Panc1 (cell line): ENCODE measurements at regions of chr2 and their contacts with region 1.

Region 1: DNA sequence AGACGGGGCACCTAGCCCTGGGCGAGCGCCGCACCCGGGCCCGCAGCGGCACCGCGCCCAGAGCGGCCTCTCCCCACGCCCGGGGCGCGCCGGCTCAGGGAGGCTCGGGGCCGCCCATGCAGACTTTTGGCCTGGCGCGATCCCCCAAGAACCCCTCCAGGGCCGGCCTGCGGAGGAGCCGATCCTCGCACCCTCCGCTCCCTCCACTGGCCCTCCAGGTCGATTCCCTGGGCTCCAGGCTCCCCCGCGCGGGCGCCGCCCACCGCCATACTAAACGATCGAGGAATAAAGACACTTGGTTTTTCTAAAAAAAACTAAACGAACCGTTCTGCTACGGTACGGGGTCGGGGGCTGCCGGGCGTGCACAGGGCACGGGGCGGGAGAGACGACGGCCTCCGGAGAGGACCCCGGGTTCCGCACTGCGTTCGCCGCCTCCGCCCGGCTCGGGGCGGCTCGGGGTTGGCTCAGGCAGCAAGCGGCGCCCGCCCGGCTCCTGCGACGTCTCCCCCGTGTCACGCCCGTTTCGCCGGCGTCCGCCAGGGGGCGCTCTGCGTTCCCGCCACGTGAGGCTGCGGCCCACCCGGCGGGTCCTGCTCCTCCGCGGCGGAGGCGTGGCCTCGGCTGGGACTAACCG is 365 bp upstream of the KHK start:
- DNase-seq: peak; percentile 59
- ATAC-seq: peak; percentile 90
- H3K4me3 ChIP-seq: peak overlapping the region; percentile 61 to 62
- H3K27ac ChIP-seq: peak overlapping the region; percentile 70
- H3K4me1 ChIP-seq: peaks cover 7% of the 10 kb centered on the region
- H3K27me3 ChIP-seq: no peaks in the 10 kb centered on the region
- CTCF ChIP-seq: peak; percentile 97

Region 2: DNA sequence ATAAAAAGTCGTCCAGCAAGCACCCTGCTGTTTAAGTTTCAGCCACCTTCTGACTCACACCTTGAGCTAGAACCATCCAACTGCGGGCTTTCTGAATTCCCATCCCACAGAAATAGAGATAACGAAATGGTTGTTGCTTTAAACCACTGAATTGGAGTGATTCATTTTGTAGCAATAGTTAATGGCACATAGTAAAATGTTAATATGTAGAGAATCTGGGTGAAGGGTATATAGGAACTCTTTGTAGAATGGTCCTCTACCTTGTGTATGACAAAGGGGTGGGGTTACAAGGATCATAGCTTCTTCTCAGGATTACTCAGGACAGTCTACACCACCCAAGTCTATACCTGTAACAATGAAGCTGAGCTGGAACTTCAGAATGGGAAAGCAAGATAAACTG is 118.2 kb before region 1 on chr2:
- CTCF ChIA-PET with region 1: no interaction called
- POLR2A ChIA-PET with region 1: no interaction called
- in situ Hi-C with region 1: no loop called
- intact Hi-C with region 1: loop called (anchors 10 kb)
- DNase-seq: no peak
- ATAC-seq: no peak
- H3K4me3 ChIP-seq: no peak overlapping the region
- H3K27ac ChIP-seq: no peak overlapping the region
- H3K4me1 ChIP-seq: peaks cover 12% of the 10 kb centered on the region
- H3K27me3 ChIP-seq: peaks cover 13% of the 10 kb centered on the region
- CTCF ChIP-seq: no peak

Region 3: GRCh38 chr2:27162151-27163121 is 76.2 kb after region 1 on chr2:
- CTCF ChIA-PET with region 1: no interaction called
- POLR2A ChIA-PET with region 1: interaction called, 11 read pairs
- in situ Hi-C with region 1: no loop called
- intact Hi-C with region 1: no loop called
- DNase-seq: no peak
- ATAC-seq: no peak
- H3K4me3 ChIP-seq: peak overlapping the region; percentile 21 to 43; a peak in 3 of 4 replicates
- H3K27ac ChIP-seq: peak overlapping the region; percentile 61
- H3K4me1 ChIP-seq: no peaks in the 10 kb centered on the region
- H3K27me3 ChIP-seq: no peaks in the 10 kb centered on the region
- CTCF ChIP-seq: no peak

Region 4: GRCh38 chr2:27185331-27186026 is 99.3 kb after region 1 on chr2:
- CTCF ChIA-PET with region 1: no interaction called
- POLR2A ChIA-PET with region 1: no interaction called
- in situ Hi-C with region 1: no loop called
- intact Hi-C with region 1: no loop called
- DNase-seq: no peak
- ATAC-seq: no peak
- H3K4me3 ChIP-seq: no peak overlapping the region
- H3K27ac ChIP-seq: no peak overlapping the region
- H3K4me1 ChIP-seq: no peaks in the 10 kb centered on the region
- H3K27me3 ChIP-seq: no peaks in the 10 kb centered on the region
- CTCF ChIP-seq: no peak